Activated CD8-positive, alpha-beta T cell treated with anti-CD3 and anti-CD28 coated beads, Interleukin-2, amount 10 ng/mL, durations not matched to agents 7 days and 5 days (primary cell): ENCODE measurements at regions of chr17 and their contacts with region 1.

Region 1: DNA sequence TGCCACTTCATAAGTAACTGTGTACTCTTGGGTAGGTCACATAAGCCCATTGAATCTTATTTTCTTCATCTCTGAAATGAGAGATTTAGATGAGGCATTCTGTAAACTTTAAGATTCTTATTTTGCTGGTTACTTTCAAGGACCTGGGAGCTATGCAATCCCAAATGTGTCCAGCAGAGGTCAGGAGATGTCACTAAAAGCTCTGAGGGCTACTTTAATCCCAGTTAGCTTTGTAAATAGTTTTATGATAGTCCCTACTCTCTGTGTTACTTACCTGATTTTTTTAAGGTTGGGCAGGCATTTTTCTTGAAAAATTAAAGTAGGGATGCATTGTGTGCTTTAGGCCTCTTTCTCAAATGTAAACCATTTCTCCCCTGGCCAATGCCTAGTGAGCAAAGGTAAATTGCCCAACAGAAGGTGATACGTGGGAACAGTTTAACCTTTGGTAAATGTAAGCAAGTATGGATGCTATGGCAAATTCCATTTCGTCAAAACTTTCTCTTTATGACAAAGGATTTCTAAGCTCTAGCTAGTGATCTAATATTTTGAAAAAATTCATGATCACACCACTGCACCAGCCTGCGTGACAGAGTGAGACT is 57.1 kb upstream of the WSB1 start:
- DNase-seq: peak; percentile 83
- ATAC-seq: peak; percentile 65
- H3K4me3 Mint-ChIP-seq: no peak overlapping the region
- H3K27ac Mint-ChIP-seq: no peak overlapping the region
- H3K4me1 Mint-ChIP-seq: peaks cover 20% of the 10 kb centered on the region
- H3K27me3 Mint-ChIP-seq: peaks cover 11% of the 10 kb centered on the region

Region 2: GRCh38 chr17:27217631-27218030 is 19.2 kb before region 1 on chr17:
- CTCF ChIA-PET with region 1: interaction called, 12 read pairs
- POLR2A ChIA-PET with region 1: no interaction called
- DNase-seq: no peak
- ATAC-seq: no peak
- H3K4me3 Mint-ChIP-seq: no peak overlapping the region
- H3K27ac Mint-ChIP-seq: no peak overlapping the region
- H3K4me1 Mint-ChIP-seq: peaks cover 10% of the 10 kb centered on the region
- H3K27me3 Mint-ChIP-seq: no peaks in the 10 kb centered on the region

Region 3: GRCh38 chr17:27269974-27270373 is 33.2 kb after region 1 on chr17:
- CTCF ChIA-PET with region 1: no interaction called
- POLR2A ChIA-PET with region 1: no interaction called
- DNase-seq: no peak
- ATAC-seq: no peak
- H3K4me3 Mint-ChIP-seq: no peak overlapping the region
- H3K27ac Mint-ChIP-seq: no peak overlapping the region
- H3K4me1 Mint-ChIP-seq: no peaks in the 10 kb centered on the region
- H3K27me3 Mint-ChIP-seq: peaks cover 18% of the 10 kb centered on the region

Region 4: GRCh38 chr17:27293898-27294688 is 57.3 kb after region 1 on chr17 and contains the start of gene WSB1:
- CTCF ChIA-PET with region 1: interaction called, 51 read pairs
- POLR2A ChIA-PET with region 1: interaction called, 9 read pairs
- DNase-seq: peak; percentile 93
- ATAC-seq: peak; percentile 84
- H3K4me3 Mint-ChIP-seq: peak within 1 kb of the TSS; percentile 97
- H3K27ac Mint-ChIP-seq: peak within 1 kb of the TSS; percentile 100
- H3K4me1 Mint-ChIP-seq: peaks cover 32% of the 10 kb centered on the region
- H3K27me3 Mint-ChIP-seq: no peaks in the 10 kb centered on the region
- total RNA-seq, gene WSB1: 118 to 121 TPM

Region 5: GRCh38 chr17:27353461-27354050 is 116.7 kb after region 1 on chr17:
- CTCF ChIA-PET with region 1: interaction called, 12 read pairs
- POLR2A ChIA-PET with region 1: no interaction called
- DNase-seq: peak; percentile 92
- ATAC-seq: peak; percentile 95
- H3K4me3 Mint-ChIP-seq: peak overlapping the region; percentile 81
- H3K27ac Mint-ChIP-seq: peak overlapping the region; percentile 95
- H3K4me1 Mint-ChIP-seq: peaks cover 24% of the 10 kb centered on the region
- H3K27me3 Mint-ChIP-seq: no peaks in the 10 kb centered on the region

Region 6: DNA sequence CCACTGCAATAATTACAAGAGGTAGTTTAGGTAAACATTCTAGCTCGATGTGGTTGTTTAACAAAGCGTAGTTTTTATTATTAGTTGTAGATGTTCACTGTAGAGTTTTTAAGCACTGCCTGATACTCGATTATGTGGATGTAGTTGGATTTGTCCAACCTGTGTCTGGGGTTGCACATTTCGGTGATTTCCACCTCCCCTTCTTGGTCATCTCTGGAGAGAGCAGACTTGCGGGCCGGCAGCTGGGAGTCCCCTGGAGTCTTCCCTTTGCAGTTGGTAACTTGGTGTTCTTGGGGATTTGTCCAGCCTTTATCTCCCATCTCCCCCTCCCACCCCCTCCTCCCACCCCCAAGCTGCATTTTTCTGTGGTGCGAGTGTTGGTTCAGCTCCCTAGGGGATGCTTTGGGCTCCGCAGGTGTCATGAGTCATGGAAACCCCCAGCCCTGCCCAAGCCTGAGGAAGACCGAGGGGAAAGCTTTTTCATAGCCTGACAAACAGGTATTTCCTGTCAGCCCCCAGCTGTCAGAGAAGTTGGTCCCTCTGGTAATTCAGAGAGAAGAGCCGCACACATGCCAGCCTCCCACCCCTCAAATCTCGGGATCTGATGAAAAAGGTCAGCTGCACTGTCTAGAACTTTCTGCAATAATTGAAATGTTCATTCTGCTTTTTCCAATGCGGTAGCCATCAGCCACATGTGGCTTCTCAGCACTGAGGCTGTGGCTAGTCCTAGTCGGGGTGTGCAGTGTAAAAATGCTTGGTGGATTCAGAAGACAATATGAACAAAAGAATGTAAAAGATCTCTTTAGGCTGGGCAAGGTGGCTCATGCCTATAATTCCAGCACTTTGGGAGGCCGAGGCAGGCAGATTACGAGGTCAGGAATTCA is 269.8 kb after region 1 on chr17:
- CTCF ChIA-PET with region 1: no interaction called
- POLR2A ChIA-PET with region 1: no interaction called
- DNase-seq: no peak
- ATAC-seq: peak; percentile 59
- H3K4me3 Mint-ChIP-seq: no peak overlapping the region
- H3K27ac Mint-ChIP-seq: peak overlapping the region; percentile 18
- H3K4me1 Mint-ChIP-seq: peaks cover 43% of the 10 kb centered on the region
- H3K27me3 Mint-ChIP-seq: no peaks in the 10 kb centered on the region

Region 7: DNA sequence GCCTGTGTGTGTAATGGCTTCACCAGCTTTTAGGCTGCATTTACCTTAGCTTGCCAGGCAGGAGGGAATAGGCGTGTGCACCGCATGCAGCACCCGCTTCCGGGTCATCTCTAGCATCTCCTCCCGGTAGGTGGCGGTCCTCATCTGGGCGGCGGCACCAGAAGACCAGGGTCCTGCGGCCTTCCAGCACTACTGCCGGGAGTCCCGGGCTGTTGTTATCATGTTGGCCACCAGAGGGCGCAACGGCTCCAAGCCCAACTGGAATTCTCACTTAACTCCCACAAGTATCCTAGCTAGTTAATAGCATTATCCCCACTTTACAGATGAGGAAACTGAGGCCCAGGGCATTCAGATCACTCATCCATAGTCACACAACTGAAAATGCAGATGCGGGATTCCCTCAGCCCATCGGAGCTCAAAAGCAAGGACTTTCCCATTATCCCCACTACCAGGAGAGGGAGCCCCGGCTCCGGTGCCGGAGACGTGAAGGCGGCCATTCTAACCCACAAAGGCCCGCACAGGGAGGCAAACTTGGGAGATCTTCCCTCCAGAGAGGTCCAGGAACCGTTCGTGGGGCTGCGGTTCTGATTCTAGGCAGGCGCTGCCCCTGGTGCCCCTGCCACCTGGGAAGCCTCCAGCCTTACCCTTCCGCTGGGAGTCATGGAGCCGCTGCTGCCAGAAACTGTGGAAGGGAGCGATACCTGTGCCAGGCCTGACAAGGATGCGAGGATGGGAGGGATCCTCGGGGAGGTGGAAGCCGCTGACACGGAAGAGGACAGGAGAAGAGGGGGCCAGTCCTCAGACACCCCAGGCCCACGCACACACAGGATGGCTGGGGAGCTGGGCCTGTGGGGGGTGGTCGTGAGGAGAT is 418.1 kb after region 1 on chr17:
- CTCF ChIA-PET with region 1: interaction called, 17 read pairs
- POLR2A ChIA-PET with region 1: no interaction called
- DNase-seq: peak; percentile 79
- ATAC-seq: peak; percentile 88
- H3K4me3 Mint-ChIP-seq: no peak overlapping the region
- H3K27ac Mint-ChIP-seq: no peak overlapping the region
- H3K4me1 Mint-ChIP-seq: peaks cover 13% of the 10 kb centered on the region
- H3K27me3 Mint-ChIP-seq: no peaks in the 10 kb centered on the region